GM10248 (cell line): ENCODE measurements at regions of chr10 and their contacts with region 1.

Region 1: GRCh38 chr10:97210543-97210961 is 24.8 kb upstream of the SLIT1 start:
- DNase-seq: peak; percentile 70
- CTCF ChIP-seq: peak; percentile 94

Region 2: DNA sequence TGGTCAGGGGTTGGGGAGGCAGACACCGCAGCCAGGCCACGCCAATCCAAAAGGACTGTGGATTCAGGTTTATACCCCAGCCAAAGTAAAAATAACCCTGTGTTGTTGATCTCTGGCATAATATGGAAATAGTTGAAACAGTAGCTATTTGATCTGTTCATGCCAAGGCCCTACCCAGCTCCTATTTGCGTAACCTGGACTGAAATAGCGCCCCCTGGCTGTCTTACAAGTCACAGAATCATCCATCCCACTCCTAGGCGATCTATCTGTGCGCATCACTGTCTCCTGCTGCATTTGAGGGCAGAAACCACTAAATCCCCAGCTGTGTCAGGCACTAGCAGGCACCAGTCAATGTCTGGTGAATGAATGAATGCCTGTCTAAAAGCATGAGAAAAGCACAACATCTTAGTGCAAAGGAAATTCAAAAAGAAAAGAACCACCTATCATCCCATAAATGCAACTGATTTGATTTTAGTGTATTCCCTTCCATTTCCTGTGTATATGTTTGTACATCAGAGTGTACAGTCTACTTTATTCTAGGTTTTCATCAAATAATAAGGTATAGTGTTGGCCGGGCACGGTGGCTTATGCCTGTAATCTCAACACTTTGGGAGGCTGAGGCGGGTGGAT is 184.8 kb before region 1 on chr10:
- CTCF ChIA-PET with region 1: interaction called, 16 read pairs
- POLR2A ChIA-PET with region 1: no interaction called
- DNase-seq: peak; percentile 70
- CTCF ChIP-seq: peak; percentile 44

Region 3: GRCh38 chr10:97072851-97073665 is 137.5 kb before region 1 on chr10:
- CTCF ChIA-PET with region 1: interaction called, 484 read pairs
- POLR2A ChIA-PET with region 1: no interaction called
- DNase-seq: peak; percentile 84
- CTCF ChIP-seq: peak; percentile 96

Region 4: DNA sequence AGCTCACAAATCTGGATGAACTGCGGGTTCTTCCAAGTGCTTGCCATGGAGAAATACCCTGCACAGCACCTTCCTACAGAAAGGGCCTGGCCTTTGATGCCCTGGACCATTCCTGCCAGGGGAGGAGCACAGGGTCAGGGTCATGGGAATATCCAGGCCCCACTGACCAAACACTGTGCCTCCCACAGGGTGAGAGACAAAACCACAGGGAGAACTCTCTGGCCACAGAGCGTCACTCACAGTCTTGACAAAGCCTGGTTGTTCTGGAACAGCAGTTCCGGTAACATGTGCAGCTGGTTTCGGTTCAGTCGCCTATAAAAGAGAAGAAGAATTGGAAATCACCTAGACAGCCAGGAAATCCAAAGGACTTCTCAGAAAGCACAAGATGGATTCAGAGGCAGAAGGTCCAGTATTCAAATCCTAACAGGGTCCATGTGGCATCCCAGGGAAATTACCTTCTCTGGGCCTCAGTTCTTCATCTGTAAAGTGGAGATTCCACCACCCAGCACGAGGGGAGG is 52.9 kb before region 1 on chr10:
- CTCF ChIA-PET with region 1: interaction called, 12 read pairs
- POLR2A ChIA-PET with region 1: no interaction called
- DNase-seq: peak; percentile 49
- CTCF ChIP-seq: no peak

Region 5: GRCh38 chr10:97179731-97180362 is 30.7 kb before region 1 on chr10:
- CTCF ChIA-PET with region 1: interaction called, 17 read pairs
- POLR2A ChIA-PET with region 1: no interaction called
- DNase-seq: no peak
- CTCF ChIP-seq: no peak

Region 6: GRCh38 chr10:97222326-97222961 is 11.9 kb after region 1 on chr10:
- CTCF ChIA-PET with region 1: interaction called, 72 read pairs
- POLR2A ChIA-PET with region 1: no interaction called
- DNase-seq: no peak
- CTCF ChIP-seq: no peak